Lower leg skin (tissue), 4 donors: ENCODE measurements at regions of chr18 and their contacts with region 1.

Region 1: DNA sequence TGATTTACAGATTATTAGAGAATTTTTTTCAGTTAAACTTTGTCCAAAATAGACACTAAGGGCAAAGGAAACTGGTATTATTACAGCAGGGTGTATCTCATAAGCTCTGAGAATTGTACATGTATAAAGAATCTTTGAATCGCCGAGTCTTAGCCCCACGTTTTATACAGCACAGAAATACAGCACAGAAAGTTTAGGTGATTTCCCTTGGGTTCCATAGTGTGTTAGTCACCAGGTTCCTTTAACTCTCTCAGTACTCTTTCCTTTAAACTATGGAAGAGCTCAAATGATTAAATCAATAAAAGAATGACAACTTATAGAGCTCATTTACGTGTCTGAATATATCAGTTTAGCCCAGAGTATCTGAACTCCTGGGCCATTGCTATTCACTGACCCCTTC is 256.8 kb downstream of the NEDD4L start:
- DNase-seq: no peak
- H3K4me3 ChIP-seq: no peak overlapping the region
- CTCF ChIP-seq: no peak
- POLR2A ChIP-seq: no peak

Region 2: DNA sequence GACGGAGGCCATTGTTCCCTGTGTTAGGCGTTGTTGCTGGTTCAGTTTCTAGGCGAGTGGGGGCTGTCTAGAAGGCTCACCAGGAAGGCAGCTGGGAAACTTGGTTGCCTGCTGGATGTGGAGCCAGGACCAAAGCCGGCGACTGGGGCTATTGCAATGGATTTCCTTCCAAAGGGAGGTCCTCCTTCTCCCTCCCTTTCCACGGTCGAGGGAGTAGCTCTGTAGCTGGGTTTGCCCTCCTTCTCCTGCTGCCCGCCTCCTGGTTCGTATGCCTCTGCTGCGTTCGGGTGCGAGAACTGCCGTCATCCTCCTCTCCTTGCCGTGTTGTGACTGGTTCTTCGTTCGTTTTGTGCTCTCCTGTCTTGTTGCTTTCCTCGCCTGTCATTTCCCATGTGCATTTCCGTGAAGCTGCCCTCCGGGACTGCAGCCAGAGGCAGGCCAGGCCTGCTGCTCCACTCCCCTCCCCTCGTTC is 53.5 kb before region 1 on chr18:
- intact Hi-C with region 1: loop called (anchors 2 kb)
- DNase-seq: no peak
- H3K4me3 ChIP-seq: no peak overlapping the region
- CTCF ChIP-seq: no peak
- POLR2A ChIP-seq: no peak